ENCODE measurements at regions of chr7 and their contacts with region 1.

Region 1: DNA sequence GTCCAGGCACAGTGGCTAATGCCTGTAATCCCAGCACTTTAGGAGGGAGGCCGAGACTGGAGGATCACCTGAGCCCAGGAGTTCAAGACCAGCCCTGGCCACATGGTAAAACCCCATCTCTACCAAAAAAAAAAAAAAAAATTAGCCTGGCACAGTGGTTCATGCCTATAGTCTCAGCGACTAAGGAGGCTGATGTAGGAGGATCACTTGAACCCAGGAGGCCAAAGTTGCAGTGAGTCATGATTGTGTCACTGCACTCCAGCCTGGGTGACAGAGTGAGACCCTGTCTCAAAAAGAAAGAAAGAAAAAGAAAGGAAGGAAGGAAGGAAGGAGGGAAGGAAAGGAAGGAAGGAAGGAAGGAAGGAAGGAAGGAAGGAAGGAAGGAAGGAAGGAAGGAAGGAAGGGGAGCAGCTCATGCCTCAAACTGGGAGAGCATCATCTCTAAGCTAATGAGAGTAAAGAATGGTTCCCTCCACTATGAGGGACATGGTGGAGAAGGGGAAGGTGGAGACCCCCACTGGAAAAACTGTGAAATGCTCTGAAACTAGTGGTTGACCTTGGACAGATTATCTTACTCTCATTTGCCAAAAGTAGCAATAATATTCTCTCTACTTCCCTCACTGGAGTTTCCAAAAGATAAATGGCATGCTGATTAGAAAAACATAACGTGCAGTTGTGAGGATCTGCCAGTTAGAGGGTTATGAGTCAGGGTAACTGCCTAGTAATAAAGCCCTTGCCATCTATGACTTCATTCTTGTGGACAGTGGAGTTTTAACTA is 16.8 kb downstream of the GIMAP5 start:
- DNase-seq: peak; percentile 43
- ATAC-seq: peak; percentile 69
- H3K4me3 Mint-ChIP-seq: peak overlapping the region; percentile 21
- H3K27ac Mint-ChIP-seq: peak overlapping the region; percentile 92
- H3K4me1 Mint-ChIP-seq: peaks cover 70% of the 10 kb centered on the region
- H3K27me3 Mint-ChIP-seq: no peaks in the 10 kb centered on the region

Region 2: DNA sequence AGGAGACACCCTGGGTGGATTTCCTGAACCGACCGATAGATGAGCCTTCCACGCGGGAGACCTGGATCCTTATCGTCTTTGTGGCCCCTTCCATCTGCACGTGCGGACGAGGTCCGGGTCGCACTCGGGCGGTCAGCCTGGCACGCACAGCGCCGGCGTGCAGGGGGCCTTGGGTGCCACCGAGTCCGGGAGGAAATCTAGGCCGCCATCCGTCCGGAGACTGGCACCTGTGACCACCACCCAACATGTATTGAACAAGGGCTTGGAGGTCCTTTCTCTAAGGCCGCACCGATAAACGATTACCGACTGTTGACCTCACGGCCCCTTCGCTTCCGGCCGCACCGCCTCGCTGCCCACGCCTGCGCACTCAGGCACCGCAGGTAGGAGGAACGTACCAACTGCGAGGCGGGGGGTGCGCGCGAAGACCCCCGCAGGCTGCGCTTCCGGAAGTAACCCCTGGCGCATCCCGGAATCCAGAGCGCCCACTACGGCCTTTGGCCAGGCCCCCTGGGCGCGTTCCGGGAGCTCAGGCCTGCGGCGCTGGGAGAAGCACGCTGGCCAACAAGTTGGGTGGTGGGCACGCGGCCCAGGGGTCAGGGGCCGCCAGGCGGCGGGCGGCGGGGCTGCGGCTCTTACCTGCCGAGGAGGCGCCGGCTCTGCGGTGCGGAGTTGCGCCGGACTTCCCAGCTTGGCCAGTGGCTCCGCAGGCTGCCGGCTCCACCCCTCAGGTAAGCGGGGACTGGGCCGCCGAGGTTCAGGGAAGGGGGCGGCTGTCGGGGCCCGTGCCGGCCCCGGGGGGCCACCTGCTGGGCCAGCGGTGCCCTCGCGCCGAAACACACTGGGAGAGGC is 431.0 kb before region 1 on chr7 and contains the starts of genes ACTR3C and LRRC61:
- CTCF ChIA-PET with region 1: no interaction called
- POLR2A ChIA-PET with region 1: no interaction called
- intact Hi-C with region 1: loop called in 1 of 2 experiments (anchors 1 kb)
- DNase-seq: peak; percentile 78
- ATAC-seq: peak; percentile 24
- H3K4me3 Mint-ChIP-seq: peak within 1 kb of the TSS; percentile 91
- H3K27ac Mint-ChIP-seq: peak within 1 kb of the TSS; percentile 99
- H3K4me1 Mint-ChIP-seq: peaks cover 52% of the 10 kb centered on the region
- H3K27me3 Mint-ChIP-seq: no peaks in the 10 kb centered on the region
- total RNA-seq, gene ACTR3C: 3.2 to 4.7 TPM
- total RNA-seq, gene LRRC61: 13.0 to 17.4 TPM

Region 3: DNA sequence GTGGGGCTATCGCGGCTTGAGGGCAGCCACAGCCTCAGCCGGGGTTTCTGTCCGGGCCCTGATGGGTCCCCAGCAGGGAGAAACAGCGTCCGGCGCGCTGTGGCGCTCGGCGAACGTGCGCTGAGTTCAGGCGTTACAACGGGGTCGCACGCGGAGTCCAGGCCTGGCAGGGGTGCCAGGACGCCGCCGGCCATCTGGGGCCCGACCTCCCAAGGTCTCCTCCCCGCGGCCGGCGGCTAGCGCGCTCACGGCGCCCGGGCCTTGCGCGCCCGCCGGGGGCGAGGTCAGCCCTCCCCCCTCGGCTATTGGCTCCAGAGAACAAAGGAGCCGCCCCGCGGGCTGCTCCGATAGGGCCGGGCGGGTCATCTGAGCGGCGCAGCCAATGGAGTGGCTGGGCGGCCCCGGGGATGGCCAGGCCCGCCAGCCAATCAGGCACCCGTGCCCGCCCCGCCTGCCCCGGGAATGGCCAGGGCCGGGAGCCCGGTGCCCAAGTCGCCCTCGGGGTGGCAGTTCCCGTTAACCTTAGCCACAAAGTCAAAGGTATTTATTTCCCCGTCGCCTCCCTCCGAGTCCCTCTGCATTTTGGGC is 375.1 kb before region 1 on chr7 and contains the start of gene ZNF775:
- CTCF ChIA-PET with region 1: no interaction called
- POLR2A ChIA-PET with region 1: interaction called, 3 read pairs
- intact Hi-C with region 1: loop called in 1 of 2 experiments (anchors 5 kb)
- DNase-seq: peak; percentile 96
- ATAC-seq: peak; percentile 98
- H3K4me3 Mint-ChIP-seq: peak within 1 kb of the TSS; percentile 81
- H3K27ac Mint-ChIP-seq: peak within 1 kb of the TSS; percentile 63
- H3K4me1 Mint-ChIP-seq: peaks cover 53% of the 10 kb centered on the region
- H3K27me3 Mint-ChIP-seq: no peaks in the 10 kb centered on the region
- total RNA-seq, gene ZNF775: 3.9 to 5.1 TPM

Region 4: GRCh38 chr7:150514748-150515222 is 239.2 kb before region 1 on chr7 and contains the start of gene GIMAP7:
- CTCF ChIA-PET with region 1: interaction called, 6 read pairs
- POLR2A ChIA-PET with region 1: interaction called, 3 read pairs
- intact Hi-C with region 1: loop called (anchors 1 to 2 kb)
- DNase-seq: peak; percentile 73
- ATAC-seq: peak; percentile 81
- H3K4me3 Mint-ChIP-seq: peak within 1 kb of the TSS; percentile 96
- H3K27ac Mint-ChIP-seq: peak within 1 kb of the TSS; percentile 99
- H3K4me1 Mint-ChIP-seq: peaks cover 48% of the 10 kb centered on the region
- H3K27me3 Mint-ChIP-seq: no peaks in the 10 kb centered on the region
- total RNA-seq, gene GIMAP7: 34.5 to 36.9 TPM

Region 5: DNA sequence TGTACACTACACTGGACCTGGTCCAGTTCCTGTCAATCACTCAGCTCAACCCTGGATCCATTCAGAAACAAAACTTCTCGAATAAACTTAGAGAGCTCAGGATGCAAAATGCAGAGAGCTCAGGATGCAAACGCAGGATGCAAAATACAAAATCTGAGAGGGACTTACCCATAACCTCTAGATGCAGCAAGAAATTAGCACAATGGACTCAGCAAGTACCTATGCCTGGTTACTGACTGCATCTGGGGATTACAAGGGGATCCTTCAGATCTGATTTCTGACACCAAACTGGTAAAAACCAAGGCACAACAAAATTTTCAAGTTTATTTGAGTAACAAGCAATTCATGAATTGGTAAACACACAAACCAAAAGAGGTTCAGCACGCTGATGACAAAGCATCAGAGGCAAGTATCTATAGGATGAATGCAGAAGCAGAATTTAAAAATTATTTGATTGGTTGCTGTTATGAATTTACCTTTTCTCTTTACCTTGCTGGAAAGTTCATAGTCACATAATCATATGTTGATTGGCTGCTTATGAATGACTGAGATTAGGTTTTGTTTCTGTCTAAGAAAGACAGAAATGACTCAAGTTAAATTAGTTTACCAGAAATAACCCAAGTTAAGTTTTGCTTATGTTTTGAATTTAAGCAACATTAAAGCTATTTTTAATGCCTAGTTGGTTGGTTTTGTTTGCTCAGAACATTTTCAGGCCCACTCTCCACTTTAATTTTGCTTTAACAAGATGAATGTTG is 133.2 kb before region 1 on chr7:
- CTCF ChIA-PET with region 1: interaction called, 8 read pairs
- POLR2A ChIA-PET with region 1: interaction called, 5 read pairs
- intact Hi-C with region 1: loop called in 1 of 2 experiments (anchors 1 kb)
- DNase-seq: no peak
- ATAC-seq: peak; percentile 75
- H3K4me3 Mint-ChIP-seq: no peak overlapping the region
- H3K27ac Mint-ChIP-seq: peak overlapping the region; percentile 79
- H3K4me1 Mint-ChIP-seq: peaks cover 53% of the 10 kb centered on the region
- H3K27me3 Mint-ChIP-seq: no peaks in the 10 kb centered on the region

Region 6: GRCh38 chr7:150668472-150668911 is 85.5 kb before region 1 on chr7:
- CTCF ChIA-PET with region 1: interaction called, 3 read pairs
- POLR2A ChIA-PET with region 1: interaction called, 7 read pairs
- intact Hi-C with region 1: loop called (anchors 1 kb)
- DNase-seq: peak; percentile 77
- ATAC-seq: peak; percentile 76
- H3K4me3 Mint-ChIP-seq: peak overlapping the region; percentile 28
- H3K27ac Mint-ChIP-seq: peak overlapping the region; percentile 94
- H3K4me1 Mint-ChIP-seq: peaks cover 89% of the 10 kb centered on the region
- H3K27me3 Mint-ChIP-seq: no peaks in the 10 kb centered on the region

Region 7: GRCh38 chr7:150716368-150716767 is 37.6 kb before region 1 on chr7 and contains the start of gene GIMAP1:
- CTCF ChIA-PET with region 1: interaction called, 7 read pairs
- POLR2A ChIA-PET with region 1: interaction called, 10 read pairs
- intact Hi-C with region 1: loop called (anchors 1 kb)
- DNase-seq: peak; percentile 72
- ATAC-seq: peak; percentile 75
- H3K4me3 Mint-ChIP-seq: peak within 1 kb of the TSS; percentile 95
- H3K27ac Mint-ChIP-seq: peak within 1 kb of the TSS; percentile 99
- H3K4me1 Mint-ChIP-seq: peaks cover 50% of the 10 kb centered on the region
- H3K27me3 Mint-ChIP-seq: no peaks in the 10 kb centered on the region
- total RNA-seq, gene GIMAP1: 3.5 to 5.5 TPM

Region 8: GRCh38 chr7:151038951-151039849 is 285.2 kb after region 1 on chr7:
- CTCF ChIA-PET with region 1: no interaction called
- POLR2A ChIA-PET with region 1: no interaction called
- intact Hi-C with region 1: no loop called
- DNase-seq: peak; percentile 88
- ATAC-seq: peak; percentile 94
- H3K4me3 Mint-ChIP-seq: peak overlapping the region; percentile 10
- H3K27ac Mint-ChIP-seq: peak overlapping the region; percentile 85
- H3K4me1 Mint-ChIP-seq: peaks cover 17% of the 10 kb centered on the region
- H3K27me3 Mint-ChIP-seq: no peaks in the 10 kb centered on the region

Measured in activated CD4-positive, alpha-beta T cell treated with anti-CD3 and anti-CD28 coated beads for 36 hours (primary cell).